Activated CD4-positive, alpha-beta memory T cell treated with anti-CD3 and anti-CD28 coated beads, Interleukin-2, amount 10 ng/mL, durations not matched to agents 7 days and 5 days (primary cell): ENCODE measurements at regions of chr13 and their contacts with region 1.

Region 1: DNA sequence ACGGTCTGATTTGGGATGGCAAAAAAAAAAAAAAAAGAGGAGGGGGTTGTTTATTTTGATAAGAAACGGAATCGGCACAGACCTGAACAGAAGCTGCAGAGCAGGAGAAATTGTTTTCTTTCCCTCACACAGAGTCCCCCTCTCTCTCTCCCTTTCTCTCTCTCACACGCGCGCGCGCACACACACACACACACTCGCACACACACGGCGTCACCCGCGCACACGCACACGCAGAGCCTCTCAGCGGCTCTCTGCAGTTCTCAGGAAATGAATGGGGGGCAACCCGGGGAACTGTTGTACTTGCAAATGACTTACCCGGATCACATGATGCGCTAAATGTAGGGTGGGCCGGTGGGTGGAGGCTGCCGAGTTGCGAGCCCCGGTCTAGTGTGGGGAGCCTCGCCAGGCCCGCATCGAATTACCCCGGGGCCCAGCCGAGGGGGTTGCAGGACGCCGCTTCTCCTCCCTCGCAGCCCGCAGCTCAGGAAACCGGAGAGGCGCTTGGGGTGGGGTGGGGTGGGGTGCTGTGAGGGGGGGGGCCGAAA is 475 bp downstream of the KLF12 start:
- DNase-seq: peak; percentile 89
- H3K4me3 Mint-ChIP-seq: peak overlapping the region; percentile 97
- H3K27ac Mint-ChIP-seq: peak overlapping the region; percentile 100
- H3K4me1 Mint-ChIP-seq: peaks cover 35% of the 10 kb centered on the region
- H3K27me3 Mint-ChIP-seq: no peaks in the 10 kb centered on the region

Region 2: GRCh38 chr13:73765651-73766384 is 367.9 kb before region 1 on chr13:
- CTCF ChIA-PET with region 1: no interaction called
- POLR2A ChIA-PET with region 1: interaction called, 25 read pairs
- DNase-seq: peak; percentile 77
- H3K4me3 Mint-ChIP-seq: peak overlapping the region; percentile 59
- H3K27ac Mint-ChIP-seq: peak overlapping the region; percentile 90
- H3K4me1 Mint-ChIP-seq: peaks cover 42% of the 10 kb centered on the region
- H3K27me3 Mint-ChIP-seq: no peaks in the 10 kb centered on the region

Region 3: GRCh38 chr13:74026753-74027152 is 107.0 kb before region 1 on chr13:
- CTCF ChIA-PET with region 1: interaction called, 4 read pairs
- POLR2A ChIA-PET with region 1: interaction called, 32 read pairs
- DNase-seq: peak; percentile 74
- H3K4me3 Mint-ChIP-seq: peak overlapping the region; percentile 65
- H3K27ac Mint-ChIP-seq: peak overlapping the region; percentile 88
- H3K4me1 Mint-ChIP-seq: peaks cover 30% of the 10 kb centered on the region
- H3K27me3 Mint-ChIP-seq: no peaks in the 10 kb centered on the region

Region 4: GRCh38 chr13:74070065-74070464 is 63.7 kb before region 1 on chr13:
- CTCF ChIA-PET with region 1: no interaction called
- POLR2A ChIA-PET with region 1: interaction called, 63 read pairs
- DNase-seq: peak; percentile 21
- H3K4me3 Mint-ChIP-seq: peak overlapping the region; percentile 46
- H3K27ac Mint-ChIP-seq: peak overlapping the region; percentile 82
- H3K4me1 Mint-ChIP-seq: peaks cover 54% of the 10 kb centered on the region
- H3K27me3 Mint-ChIP-seq: no peaks in the 10 kb centered on the region

Region 5: GRCh38 chr13:74243637-74244526 is 110.2 kb after region 1 on chr13:
- CTCF ChIA-PET with region 1: no interaction called
- POLR2A ChIA-PET with region 1: interaction called, 12 read pairs
- DNase-seq: peak; percentile 21
- H3K4me3 Mint-ChIP-seq: peak overlapping the region; percentile 56
- H3K27ac Mint-ChIP-seq: peak overlapping the region; percentile 96
- H3K4me1 Mint-ChIP-seq: peaks cover 50% of the 10 kb centered on the region
- H3K27me3 Mint-ChIP-seq: peaks cover 18% of the 10 kb centered on the region

Region 6: GRCh38 chr13:74287724-74288169 is 154.0 kb after region 1 on chr13:
- CTCF ChIA-PET with region 1: interaction called, 76 read pairs
- POLR2A ChIA-PET with region 1: interaction called, 127 read pairs
- DNase-seq: peak; percentile 78
- H3K4me3 Mint-ChIP-seq: peak overlapping the region; percentile 50
- H3K27ac Mint-ChIP-seq: peak overlapping the region; percentile 67
- H3K4me1 Mint-ChIP-seq: peaks cover 44% of the 10 kb centered on the region
- H3K27me3 Mint-ChIP-seq: peaks cover 3% of the 10 kb centered on the region